Mucosa of descending colon (tissue), 3 donors: ENCODE measurements at regions of chr4 and their contacts with region 1.

Region 1: DNA sequence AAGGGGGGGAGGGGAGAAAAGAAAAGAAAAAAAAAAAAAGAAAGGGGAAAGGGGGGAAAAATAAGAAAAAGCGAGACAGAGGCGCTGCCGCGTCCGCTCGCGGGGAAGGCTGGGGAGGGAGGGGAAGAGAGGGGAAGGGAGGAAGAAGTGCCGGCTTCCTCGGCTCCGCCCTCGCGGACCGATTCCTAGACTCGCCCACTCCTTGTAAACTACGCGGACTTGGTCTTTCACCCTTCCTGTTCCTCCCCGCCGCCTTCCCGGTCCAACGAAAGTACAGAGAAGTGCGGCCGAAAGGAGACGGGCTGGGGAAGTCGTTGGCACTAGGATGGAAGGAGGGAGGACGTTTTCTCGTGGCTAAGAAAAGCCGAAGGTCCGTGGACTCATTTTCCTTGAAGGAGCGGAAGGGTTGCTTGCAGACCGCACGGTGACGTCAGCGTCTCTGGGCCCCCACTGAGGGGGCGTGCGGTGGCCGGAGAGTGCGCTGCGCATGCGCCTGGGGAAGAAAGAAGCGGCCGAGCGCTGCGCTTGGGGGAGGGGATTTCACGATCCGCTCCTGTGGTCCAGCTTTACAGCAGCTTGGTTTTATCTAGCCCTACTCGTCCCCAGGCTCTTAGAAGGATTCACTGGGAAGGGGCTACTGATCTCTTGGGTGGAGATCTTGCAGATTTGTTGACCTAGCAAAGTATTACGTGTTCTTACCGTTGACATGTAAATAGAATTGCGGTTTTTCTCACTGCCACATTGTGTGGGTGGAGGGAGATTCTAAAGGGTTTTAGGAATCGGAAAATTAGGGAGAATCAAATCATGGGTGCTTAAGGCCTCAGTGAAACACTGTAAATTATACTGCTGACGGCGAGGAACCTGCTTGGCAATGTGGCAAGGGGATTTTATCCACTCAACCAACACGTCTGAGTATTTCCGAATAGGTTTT is at the start of gene CCNI:
- DNase-seq: peak; percentile 95 to 97 (median 96)
- ATAC-seq: peak; percentile 97
- H3K4me3 ChIP-seq: peak within 1 kb of the TSS; percentile 95
- H3K4me1 ChIP-seq: peaks cover 24% of the 10 kb centered on the region
- CTCF ChIP-seq: no peak
- total RNA-seq, gene CCNI: 175 to 323 (median 190) TPM

Region 2: GRCh38 chr4:77156533-77156911 is 80.4 kb after region 1 on chr4:
- intact Hi-C with region 1: loop called in 1 of 2 experiments (anchors 5 kb)
- DNase-seq: peak; percentile 93 to 96 (median 96)
- ATAC-seq: peak; percentile 92
- H3K4me3 ChIP-seq: peak overlapping the region; percentile 99
- H3K4me1 ChIP-seq: peaks cover 12% of the 10 kb centered on the region
- CTCF ChIP-seq: no peak